Activated naive CD4-positive, alpha-beta T cell treated with anti-CD3 and anti-CD28 coated beads for 36 hours (primary cell): ENCODE measurements at regions of chr22 and their contacts with region 1.

Region 1: GRCh38 chr22:19479357-19480172 is at the start of gene CDC45:
- DNase-seq: peak; percentile 98
- H3K4me3 Mint-ChIP-seq: peak within 1 kb of the TSS; percentile 99
- H3K27ac Mint-ChIP-seq: peak within 1 kb of the TSS; percentile 96
- H3K4me1 Mint-ChIP-seq: peaks cover 28% of the 10 kb centered on the region
- H3K27me3 Mint-ChIP-seq: no peaks in the 10 kb centered on the region
- total RNA-seq, gene CDC45: 86.3 to 91.7 TPM

Region 2: DNA sequence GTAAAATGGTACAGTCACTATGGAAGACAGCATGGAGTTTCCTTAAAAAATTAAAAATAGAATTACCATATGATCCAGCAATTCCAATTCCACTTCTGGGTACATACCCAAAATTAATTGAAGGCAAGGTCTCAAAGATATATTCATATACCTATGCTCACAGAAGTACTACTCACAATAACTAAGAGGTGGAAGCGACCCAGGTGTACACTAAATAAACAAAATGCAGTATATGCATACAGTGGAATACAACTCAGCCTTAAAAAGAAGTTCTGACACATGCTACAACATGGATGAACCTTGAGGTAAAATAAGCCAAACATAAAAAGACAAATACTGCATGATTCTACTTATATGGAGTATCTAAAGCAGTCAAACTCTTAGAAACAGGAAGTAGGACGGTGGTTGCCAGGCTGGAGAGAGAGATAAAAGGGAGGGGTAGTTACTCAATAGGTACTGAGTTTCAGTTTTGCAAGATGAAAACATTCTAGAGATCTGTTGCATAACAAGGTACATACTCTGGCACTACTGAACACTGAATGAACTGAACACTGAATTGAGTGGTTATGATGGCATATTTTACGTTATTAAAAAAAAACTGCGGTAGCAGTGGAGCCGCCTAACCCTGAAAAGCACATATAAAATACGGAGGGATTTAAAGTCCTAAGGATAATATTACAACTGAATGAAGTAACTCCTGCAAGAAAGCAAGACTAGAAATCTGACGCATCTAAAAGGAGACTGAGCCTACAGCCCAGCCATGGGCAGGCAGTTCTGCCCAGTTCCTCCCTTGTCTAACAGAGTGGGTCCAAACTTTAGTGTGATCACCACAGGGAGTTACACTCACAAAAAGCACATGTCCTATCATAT is 370.1 kb before region 1 on chr22:
- CTCF ChIA-PET with region 1: no interaction called
- intact Hi-C with region 1: loop called (anchors 2 kb)
- DNase-seq: peak; percentile 78
- H3K4me3 Mint-ChIP-seq: peak overlapping the region; percentile 39
- H3K27ac Mint-ChIP-seq: peak overlapping the region; percentile 79
- H3K4me1 Mint-ChIP-seq: peaks cover 67% of the 10 kb centered on the region
- H3K27me3 Mint-ChIP-seq: no peaks in the 10 kb centered on the region

Region 3: DNA sequence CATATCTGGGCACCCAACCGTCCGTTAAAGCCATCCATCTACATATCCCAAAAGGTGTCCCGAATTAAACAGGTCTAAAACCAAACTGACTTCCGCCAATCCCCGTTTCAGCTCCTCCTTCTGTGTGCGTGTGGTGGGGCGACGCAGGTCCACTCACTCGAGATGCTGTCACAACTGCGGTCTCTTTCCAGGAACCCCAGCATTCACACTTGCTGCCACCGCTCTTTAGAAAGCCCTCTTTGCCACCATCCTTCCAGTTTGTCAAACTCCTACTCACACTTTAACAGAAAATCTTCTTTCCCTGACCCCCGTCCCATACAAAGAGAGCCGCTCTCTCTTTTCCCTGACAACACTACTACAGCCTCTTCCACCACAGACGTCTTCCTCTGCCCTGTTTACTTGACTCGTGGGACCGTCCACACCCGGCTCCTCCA is 335.6 kb before region 1 on chr22:
- CTCF ChIA-PET with region 1: no interaction called
- intact Hi-C with region 1: loop called (anchors 1 kb)
- DNase-seq: peak; percentile 50
- H3K4me3 Mint-ChIP-seq: peak overlapping the region; percentile 99
- H3K27ac Mint-ChIP-seq: peak overlapping the region; percentile 91
- H3K4me1 Mint-ChIP-seq: peaks cover 19% of the 10 kb centered on the region
- H3K27me3 Mint-ChIP-seq: peaks cover 13% of the 10 kb centered on the region

Region 4: GRCh38 chr22:19218541-19219233 is 260.9 kb before region 1 on chr22:
- CTCF ChIA-PET with region 1: no interaction called
- intact Hi-C with region 1: loop called (anchors 2 kb)
- DNase-seq: no peak
- H3K4me3 Mint-ChIP-seq: no peak overlapping the region
- H3K27ac Mint-ChIP-seq: no peak overlapping the region
- H3K4me1 Mint-ChIP-seq: peaks cover 4% of the 10 kb centered on the region
- H3K27me3 Mint-ChIP-seq: no peaks in the 10 kb centered on the region

Region 5: DNA sequence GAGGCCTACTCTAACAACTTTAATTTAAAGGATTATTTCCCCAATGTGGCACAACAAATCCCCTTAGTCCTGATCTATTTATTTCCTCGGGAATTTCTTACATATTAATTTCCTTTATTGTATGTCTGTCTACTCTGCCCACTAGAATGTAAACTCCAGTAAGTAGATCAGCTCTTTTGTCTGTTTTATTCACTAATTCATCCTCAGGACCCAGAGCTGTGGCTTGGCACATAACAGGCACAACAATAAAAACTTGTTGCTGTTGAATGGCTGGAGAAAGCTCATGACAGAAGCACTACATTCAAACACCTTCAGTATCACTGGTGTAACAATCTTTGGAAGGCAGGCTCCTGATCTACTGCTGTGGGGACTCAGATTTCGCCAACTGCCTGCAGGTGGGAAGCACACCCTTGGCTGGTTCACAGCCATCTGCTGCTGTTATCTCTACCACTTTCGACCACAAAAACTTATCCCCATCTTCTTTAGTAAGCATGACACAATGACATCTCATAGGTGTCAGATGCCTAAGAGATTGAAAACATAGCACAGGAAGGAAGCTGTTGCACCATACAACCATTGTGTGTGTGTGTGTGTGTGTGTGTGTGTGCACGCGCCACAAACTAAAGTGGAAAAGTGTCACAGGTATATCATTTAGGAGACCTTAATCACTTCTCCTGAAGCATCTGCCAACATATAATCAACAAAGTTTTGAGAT is 59.9 kb before region 1 on chr22:
- CTCF ChIA-PET with region 1: no interaction called
- intact Hi-C with region 1: loop called (anchors 1 kb)
- DNase-seq: peak; percentile 71
- H3K4me3 Mint-ChIP-seq: no peak overlapping the region
- H3K27ac Mint-ChIP-seq: peak overlapping the region; percentile 81
- H3K4me1 Mint-ChIP-seq: peaks cover 56% of the 10 kb centered on the region
- H3K27me3 Mint-ChIP-seq: no peaks in the 10 kb centered on the region

Region 6: GRCh38 chr22:19447388-19448075 is 32.0 kb before region 1 on chr22 and contains the start of gene C22orf39:
- CTCF ChIA-PET with region 1: interaction called, 3 read pairs
- intact Hi-C with region 1: loop called (anchors 1 kb)
- DNase-seq: peak; percentile 93
- H3K4me3 Mint-ChIP-seq: peak within 1 kb of the TSS; percentile 86
- H3K27ac Mint-ChIP-seq: peak within 1 kb of the TSS; percentile 90
- H3K4me1 Mint-ChIP-seq: peaks cover 46% of the 10 kb centered on the region
- H3K27me3 Mint-ChIP-seq: no peaks in the 10 kb centered on the region
- total RNA-seq, gene C22orf39: 29.3 to 30.2 TPM

Region 7: DNA sequence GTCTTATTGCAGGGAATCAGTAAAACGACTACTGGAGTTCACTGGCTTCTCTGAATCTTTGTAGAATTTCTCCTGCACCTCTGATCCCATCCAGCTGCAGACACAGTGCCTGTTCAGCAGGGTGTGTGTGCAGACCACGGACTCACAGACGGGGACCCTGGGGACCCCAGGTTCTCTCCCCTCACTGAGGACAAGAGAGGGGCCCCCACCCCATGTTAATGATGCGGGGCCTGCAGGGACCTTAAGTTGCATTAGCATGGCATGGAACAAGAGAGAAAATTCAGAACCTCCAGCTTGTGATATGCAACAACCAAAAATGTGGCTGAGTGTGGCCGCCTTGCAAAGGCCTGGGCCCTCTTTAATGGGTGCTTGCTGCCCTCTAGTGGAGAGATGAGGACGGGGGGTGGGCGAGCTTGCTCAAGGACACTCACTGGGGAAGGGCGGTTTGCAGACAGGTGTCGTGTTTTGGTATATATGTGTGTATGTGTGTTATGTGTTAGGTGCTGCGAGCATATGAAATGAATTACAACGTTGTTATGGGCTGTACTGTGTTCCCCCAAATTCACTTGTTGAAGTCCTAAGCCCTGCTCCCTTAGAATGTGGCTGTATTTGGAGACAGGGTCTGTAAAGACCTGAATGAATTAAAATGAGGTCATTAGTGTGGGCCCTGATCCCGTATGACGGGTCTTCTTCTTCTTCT is 150.3 kb after region 1 on chr22:
- CTCF ChIA-PET with region 1: interaction called, 11 read pairs
- intact Hi-C with region 1: loop called (anchors 1 kb)
- DNase-seq: peak; percentile 94
- H3K4me3 Mint-ChIP-seq: no peak overlapping the region
- H3K27ac Mint-ChIP-seq: no peak overlapping the region
- H3K4me1 Mint-ChIP-seq: peaks cover 3% of the 10 kb centered on the region
- H3K27me3 Mint-ChIP-seq: no peaks in the 10 kb centered on the region